Colonic mucosa (tissue), 4 donors: ENCODE measurements at regions of chr17 and their contacts with region 1.

Region 1: GRCh38 chr17:50487213-50488096 is 8.8 kb downstream of the RSAD1 start:
- DNase-seq: no peak
- H3K4me3 ChIP-seq: no peak overlapping the region
- H3K27ac ChIP-seq: no peak overlapping the region
- H3K4me1 ChIP-seq: no peaks in the 10 kb centered on the region
- H3K27me3 ChIP-seq: no peaks in the 10 kb centered on the region
- CTCF ChIP-seq: no peak

Region 2: GRCh38 chr17:50697663-50698274 is 210.3 kb after region 1 on chr17:
- intact Hi-C with region 1: loop called (anchors 5 kb)
- DNase-seq: no peak
- H3K4me3 ChIP-seq: no peak overlapping the region
- H3K27ac ChIP-seq: no peak overlapping the region
- H3K4me1 ChIP-seq: no peaks in the 10 kb centered on the region
- H3K27me3 ChIP-seq: no peaks in the 10 kb centered on the region
- CTCF ChIP-seq: no peak

Region 3: DNA sequence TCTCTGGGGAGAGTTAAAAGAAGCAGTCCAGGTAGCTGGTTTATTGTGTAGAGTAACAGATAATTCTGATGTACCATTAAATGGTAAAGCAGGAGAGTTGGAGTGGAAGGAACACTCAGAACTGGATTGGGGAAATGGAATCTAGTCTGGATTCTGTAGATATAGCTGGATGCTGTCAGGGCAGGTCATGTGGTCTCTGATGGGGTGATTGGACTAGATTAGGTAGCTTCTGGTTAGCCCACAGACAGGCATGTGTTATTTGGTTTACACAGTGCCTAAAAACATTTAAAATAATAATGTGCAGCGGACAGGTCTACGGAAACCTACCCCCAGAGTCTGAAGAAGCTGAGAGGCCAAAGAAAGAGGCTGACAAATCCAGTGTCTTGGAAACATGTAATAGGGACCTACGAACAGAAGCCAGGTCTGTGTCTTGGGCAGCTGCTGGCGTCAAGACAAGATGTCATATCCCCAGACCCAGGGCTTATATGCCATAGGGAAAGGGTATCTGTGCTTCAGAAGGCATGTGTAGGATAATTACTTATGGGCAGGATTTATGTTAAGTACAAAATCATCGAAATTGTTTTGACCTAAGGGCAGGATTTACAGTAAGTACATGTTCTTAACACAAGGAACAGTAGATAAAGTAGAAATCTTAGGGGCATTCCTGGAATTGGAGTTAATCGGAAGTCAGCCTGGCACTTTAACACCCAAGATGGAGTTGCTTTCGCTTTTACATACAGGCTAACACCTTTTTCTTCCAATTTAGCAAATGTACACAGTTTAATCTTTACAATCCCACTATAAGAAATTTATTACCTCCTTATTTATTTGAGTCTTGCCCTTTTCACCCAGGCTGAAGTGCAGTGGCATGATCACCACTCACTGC is 244.4 kb after region 1 on chr17:
- intact Hi-C with region 1: no loop called
- DNase-seq: no peak
- H3K4me3 ChIP-seq: no peak overlapping the region
- H3K27ac ChIP-seq: peak overlapping the region; percentile 3
- H3K4me1 ChIP-seq: no peaks in the 10 kb centered on the region
- H3K27me3 ChIP-seq: no peaks in the 10 kb centered on the region
- CTCF ChIP-seq: no peak

Region 4: DNA sequence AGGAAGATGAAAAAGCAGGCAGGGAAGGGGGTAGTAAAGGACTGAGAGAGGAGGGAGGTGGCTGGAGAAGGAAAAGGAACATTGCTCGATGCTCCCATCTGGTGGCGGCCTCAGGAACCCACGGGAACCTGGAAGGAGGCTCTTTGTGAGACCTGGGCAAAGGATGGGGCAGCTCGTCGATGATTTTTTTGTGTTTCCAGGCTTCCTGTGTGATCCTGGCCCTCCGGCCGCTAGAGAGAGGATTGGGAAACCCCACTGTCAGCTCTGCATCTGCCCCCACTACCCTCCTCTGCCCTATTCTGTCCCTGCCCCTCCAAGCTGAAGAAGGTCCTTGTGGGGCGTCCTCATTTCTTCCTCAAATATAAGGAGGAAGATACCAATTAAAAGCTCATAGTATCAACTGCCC is 354.5 kb after region 1 on chr17:
- intact Hi-C with region 1: no loop called
- DNase-seq: peak; percentile 83
- H3K4me3 ChIP-seq: no peak overlapping the region
- H3K27ac ChIP-seq: no peak overlapping the region
- H3K4me1 ChIP-seq: no peaks in the 10 kb centered on the region
- H3K27me3 ChIP-seq: no peaks in the 10 kb centered on the region
- CTCF ChIP-seq: peak; percentile 70